Right ventricle myocardium inferior (tissue), 1 donor: ENCODE measurements at regions of chr1 and their contacts with region 1.

Region 1: GRCh38 chr1:16155532-16156410 is at the start of gene EPHA2:
- DNase-seq: peak; percentile 95
- ATAC-seq: peak; percentile 77
- total RNA-seq, gene EPHA2: 7.3 TPM

Region 2: DNA sequence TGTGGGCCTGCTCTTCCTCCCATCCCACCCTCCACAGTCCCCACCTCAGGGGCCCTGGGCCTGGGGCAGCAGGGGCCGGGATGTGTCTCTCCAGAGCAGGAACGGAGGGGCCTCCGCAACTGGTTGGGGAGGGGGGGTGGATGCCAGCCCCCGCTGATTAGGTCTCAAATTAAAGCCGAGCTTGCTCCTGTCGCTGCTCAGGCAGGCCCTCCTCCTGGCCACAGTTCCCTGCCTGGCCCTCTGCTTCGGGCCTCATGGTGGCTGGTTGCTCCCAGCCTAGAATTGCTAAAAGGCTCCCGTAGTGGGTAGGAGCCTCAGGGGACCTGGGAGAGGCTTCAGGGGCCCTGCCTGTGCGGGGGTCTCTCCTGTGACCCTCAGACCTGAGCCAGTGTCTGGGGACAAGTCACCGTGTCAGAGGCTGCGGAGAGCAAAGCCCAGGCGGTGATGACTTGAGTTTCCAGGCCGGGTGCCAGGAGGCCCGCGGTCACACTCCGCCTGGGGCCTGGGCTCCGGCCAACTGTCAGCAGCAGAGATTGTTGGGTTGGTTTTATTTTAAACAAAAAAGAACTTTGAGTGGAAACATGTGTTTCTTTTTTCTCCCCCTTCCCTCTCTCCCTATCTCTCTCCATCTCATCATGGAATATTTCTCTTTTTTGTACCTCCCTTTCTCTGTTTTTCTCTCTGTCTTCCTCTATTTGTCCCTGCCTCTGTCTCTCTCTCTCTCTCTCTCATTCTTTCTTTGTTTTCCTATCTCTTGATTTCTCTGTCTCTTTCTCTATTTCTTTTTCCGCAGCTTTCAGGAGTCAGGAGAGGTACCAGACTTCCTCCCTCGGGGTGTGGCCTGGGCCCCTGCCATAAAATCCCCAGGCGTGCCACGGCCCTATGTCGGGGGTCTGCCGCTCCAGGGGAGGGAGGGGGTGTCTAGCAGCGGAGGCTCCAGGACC is 20.1 kb after region 1 on chr1:
- intact Hi-C with region 1: loop called (anchors 2 kb)
- DNase-seq: peak; percentile 93
- ATAC-seq: peak; percentile 87

Region 3: GRCh38 chr1:16187748-16188401 is 32.1 kb after region 1 on chr1:
- intact Hi-C with region 1: loop called (anchors 2 kb)
- DNase-seq: no peak
- ATAC-seq: peak; percentile 85